Right cardiac atrium (tissue), 5 donors: ENCODE measurements at regions of chr17 and their contacts with region 1.

Region 1: GRCh38 chr17:63293323-63294075 is 152.6 kb downstream of the CYB561 start:
- DNase-seq: no peak
- ATAC-seq: no peak
- H3K4me3 ChIP-seq: no peak overlapping the region
- H3K27ac ChIP-seq: peak overlapping the region; percentile 45
- H3K4me1 ChIP-seq: peaks cover 3% of the 10 kb centered on the region
- H3K27me3 ChIP-seq: peaks cover 2% of the 10 kb centered on the region

Region 2: DNA sequence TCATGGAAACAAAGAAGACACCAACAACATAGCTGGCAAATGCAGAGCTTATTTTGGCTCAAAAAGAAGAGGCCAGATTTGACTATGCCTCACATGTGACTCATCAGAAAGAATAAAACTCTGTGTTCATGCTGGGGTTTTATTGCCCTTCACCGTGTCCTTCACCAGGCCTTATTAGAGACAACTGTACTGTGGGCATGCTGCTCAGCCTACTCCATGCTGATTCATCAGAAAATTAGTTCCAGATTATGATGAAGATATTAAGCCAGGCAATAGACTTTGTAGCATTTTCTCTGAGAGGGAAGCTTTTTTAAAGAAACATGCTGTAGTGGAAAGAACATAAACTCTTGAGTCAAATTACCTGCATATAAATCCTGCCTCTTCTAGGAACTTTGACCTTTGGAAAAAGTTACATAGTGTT is 62.8 kb after region 1 on chr17:
- intact Hi-C with region 1: loop called in 1 of 4 experiments (anchors 10 kb)
- DNase-seq: peak in 1 of 3 donors; percentile 16
- ATAC-seq: peak; percentile 86 to 91
- H3K4me3 ChIP-seq: no peak overlapping the region
- H3K27ac ChIP-seq: no peak overlapping the region
- H3K4me1 ChIP-seq: no peaks in the 10 kb centered on the region
- H3K27me3 ChIP-seq: no peaks in the 10 kb centered on the region